ENCODE measurements at regions of chr1 and their contacts with region 1.

Region 1: DNA sequence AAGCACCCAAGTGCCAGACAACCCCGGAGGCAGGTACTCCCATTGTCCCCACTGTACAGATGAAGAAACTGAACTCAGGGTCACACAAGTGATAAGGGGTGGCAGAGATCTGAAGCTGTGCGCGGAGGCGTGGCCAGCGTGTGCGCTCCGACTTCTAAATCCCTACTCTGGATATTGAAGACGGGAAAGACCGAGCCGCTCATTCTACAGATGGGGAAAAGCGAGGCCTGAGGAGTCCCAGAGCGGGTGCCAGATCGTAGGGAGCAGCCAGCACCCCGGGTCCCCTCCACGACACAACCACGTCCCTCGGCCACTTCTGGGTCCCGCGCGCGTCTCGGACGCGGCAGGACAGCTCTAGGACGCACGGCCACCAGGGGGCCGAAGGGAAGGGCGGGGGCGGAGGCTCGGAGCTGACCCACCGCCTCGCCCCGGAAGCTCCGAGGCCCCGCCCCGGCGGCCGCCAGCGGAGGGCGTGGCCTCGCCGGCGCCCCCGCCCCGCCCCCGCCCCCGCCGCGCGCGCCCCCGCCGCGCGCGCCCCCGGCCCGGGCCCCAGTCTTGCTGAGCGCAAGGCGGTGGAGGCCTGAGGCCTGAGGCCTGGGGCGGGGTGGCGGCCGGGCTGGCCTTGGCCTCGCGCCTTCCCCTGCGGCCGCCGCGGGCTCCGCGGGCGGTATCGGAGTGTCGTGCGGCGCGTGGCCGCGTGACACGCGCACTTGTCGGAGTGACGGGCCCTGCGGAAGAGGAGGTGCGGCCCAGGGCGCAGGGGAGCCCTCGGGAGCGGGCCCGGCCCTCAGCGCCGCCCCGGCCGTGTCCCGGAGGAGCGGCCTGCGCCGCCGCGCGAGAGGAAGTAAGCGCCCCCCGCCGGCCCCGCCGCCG is at the start of gene H6PD:
- DNase-seq: peak; percentile 76
- ATAC-seq: peak; percentile 69
- H3K4me3 ChIP-seq: peak within 1 kb of the TSS; percentile 78 to 84 (median 83)
- H3K27ac ChIP-seq: peak within 1 kb of the TSS; percentile 92
- H3K4me1 ChIP-seq: peaks cover 74% of the 10 kb centered on the region
- H3K27me3 ChIP-seq: peaks cover 0 to 4% of the 10 kb centered on the region in 2 experiments; a peak in 1 of 5 replicates
- CTCF ChIP-seq: peak; percentile 89
- EP300 ChIP-seq: peak in 1 of 2 experiments; percentile 8; a peak in 1 of 4 replicates
- POLR2A ChIP-seq: peak; percentile 84
- RAD21 ChIP-seq: peak; percentile 73
- total RNA-seq, gene H6PD: 6.3 and 9.3 TPM in 2 replicates

Region 2: DNA sequence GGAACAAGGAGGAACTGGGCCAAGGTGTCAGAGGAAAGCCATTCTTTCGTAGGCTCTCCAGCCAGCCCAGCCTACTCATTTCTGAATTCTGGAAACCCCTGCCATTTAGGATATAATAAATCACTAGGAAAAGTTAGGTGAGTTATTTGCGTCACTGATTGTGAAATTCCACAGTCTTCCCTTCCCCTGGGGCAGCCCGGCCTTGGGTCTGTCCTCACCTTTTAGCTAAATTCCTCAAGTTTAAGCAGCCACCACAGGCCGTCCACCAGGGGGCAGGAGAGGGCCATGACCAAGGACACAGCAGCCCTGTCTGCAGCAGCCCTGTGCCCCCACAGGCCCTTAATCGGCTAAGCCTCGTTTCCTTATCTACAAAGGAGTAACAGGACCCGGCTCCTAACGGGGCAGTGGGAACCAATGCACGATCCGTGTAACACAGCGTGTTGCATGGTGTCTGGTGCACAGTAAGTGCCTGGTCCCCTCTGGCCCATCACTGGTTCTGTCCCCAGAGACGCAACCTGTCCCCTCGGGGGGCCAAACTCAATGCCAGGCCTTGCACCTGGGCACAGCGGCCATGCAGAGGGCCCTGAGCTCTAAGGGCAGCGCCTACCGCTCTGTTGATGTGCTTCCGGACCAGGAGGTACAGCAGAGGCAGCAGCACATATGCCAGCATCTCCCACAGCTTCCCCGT is 123.6 kb before region 1 on chr1:
- CTCF ChIA-PET with region 1: no interaction called
- POLR2A ChIA-PET with region 1: interaction called, 6 read pairs
- in situ Hi-C with region 1: no loop called
- intact Hi-C with region 1: loop called (anchors 5 kb)
- DNase-seq: peak; percentile 85
- ATAC-seq: peak; percentile 53
- H3K4me3 ChIP-seq: no peak overlapping the region; a peak in 1 of 6 replicates
- H3K27ac ChIP-seq: no peak overlapping the region
- H3K4me1 ChIP-seq: peaks cover 55% of the 10 kb centered on the region
- H3K27me3 ChIP-seq: no peaks in the 10 kb centered on the region
- CTCF ChIP-seq: peak; percentile 97
- EP300 ChIP-seq: no peak
- POLR2A ChIP-seq: no peak
- RAD21 ChIP-seq: peak; percentile 93

Region 3: DNA sequence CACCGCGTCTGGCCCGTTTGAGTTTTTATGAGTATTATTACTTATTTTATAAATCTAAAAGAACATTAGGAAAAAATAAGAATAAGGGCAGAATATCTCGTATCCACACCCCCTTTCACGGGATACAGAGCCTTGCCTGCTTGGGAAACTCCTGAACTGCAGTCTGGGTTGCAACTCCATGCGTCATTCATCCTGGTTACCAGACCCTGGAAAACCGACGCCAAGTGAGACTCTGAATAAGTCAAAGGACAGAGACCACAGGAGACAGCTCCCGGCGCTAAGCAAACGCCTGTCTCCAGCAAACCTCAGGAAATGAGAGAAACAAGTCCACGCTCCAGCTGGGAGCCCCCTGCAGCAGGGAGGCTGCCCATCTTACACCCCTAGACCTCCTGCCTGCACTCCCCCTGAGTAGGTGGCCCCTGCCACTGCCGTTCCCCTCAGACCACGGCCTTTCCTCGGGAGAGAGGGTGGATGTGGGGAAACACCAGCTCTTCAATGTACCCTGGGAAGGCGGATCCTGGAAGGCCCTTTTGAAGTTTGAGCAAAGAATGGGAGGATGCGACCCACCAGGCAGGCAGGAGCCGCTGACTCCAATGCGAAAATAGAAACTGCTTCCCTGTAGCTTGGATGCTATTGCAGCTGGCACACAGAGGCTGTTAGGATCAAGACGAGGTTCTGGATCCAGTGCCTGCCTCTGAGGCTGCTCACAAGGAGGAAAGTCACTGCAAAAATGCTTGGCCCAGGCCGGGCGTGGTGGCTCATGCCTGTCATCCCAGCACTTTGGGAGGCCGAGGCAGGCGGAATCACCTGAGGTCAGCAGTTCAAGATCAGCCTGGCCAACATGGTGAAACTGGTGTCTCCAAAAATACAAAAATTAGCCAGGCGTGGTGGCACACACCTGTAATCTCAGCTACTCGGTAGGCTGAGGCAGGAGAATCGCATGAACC is 67.9 kb before region 1 on chr1:
- CTCF ChIA-PET with region 1: no interaction called
- POLR2A ChIA-PET with region 1: interaction called, 11 read pairs
- in situ Hi-C with region 1: no loop called
- intact Hi-C with region 1: no loop called
- DNase-seq: no peak
- ATAC-seq: no peak
- H3K4me3 ChIP-seq: no peak overlapping the region
- H3K27ac ChIP-seq: no peak overlapping the region
- H3K4me1 ChIP-seq: peaks cover 81% of the 10 kb centered on the region
- H3K27me3 ChIP-seq: no peaks in the 10 kb centered on the region
- CTCF ChIP-seq: no peak
- EP300 ChIP-seq: no peak
- POLR2A ChIP-seq: no peak
- RAD21 ChIP-seq: no peak

Region 4: DNA sequence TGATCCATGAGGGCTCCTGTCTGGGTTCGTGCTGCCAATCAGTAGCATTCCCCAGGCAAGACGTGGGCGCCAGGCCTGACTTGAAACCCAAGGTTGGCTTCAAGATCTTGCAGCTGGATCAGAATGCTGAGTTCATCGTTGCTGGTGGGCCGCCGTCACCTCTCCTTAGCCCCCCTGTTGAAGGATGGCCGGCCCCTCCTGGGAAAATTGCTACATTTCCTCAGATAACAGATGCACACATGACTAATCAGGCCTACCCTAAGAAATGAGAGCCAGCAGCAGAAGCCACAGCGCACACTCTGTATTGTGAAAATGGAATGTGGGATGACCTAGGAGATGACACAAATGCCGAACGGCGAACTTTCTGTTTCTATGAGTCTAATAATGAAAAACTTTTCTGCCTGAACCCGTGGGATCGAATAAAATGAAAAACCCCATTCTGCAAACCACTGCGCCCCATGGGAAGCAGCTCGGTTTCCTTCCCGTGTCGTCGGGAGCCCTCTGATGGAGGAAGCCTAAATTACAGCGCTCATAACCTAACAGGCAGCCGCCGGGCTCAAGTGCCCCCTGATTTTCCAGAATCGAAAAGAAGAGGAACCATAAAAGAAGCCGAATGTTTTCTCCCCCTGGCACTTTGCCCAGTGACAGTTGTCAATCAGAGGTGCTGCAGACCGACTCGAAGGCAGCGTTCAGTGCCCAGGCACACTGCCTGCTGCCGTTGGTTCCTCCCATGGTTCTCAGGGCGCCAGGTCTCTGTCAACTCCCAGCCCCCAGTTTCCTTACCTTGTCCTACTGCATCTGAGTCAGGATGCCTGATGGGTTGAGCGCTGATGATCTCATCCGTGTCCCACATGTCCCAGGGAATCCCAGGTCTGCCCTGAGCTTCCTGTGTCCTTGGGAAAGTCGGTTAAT is 38.1 kb before region 1 on chr1:
- CTCF ChIA-PET with region 1: no interaction called
- POLR2A ChIA-PET with region 1: interaction called, 26 read pairs
- in situ Hi-C with region 1: no loop called
- intact Hi-C with region 1: loop called (anchors 5 kb)
- DNase-seq: peak; percentile 72
- ATAC-seq: peak; percentile 60
- H3K4me3 ChIP-seq: peak overlapping the region; percentile 39 to 71 (median 53)
- H3K27ac ChIP-seq: no peak overlapping the region
- H3K4me1 ChIP-seq: peaks cover 71% of the 10 kb centered on the region
- H3K27me3 ChIP-seq: peaks cover 15 to 42% of the 10 kb centered on the region in 2 experiments
- CTCF ChIP-seq: peak; percentile 83
- EP300 ChIP-seq: no peak; a peak in 1 of 4 replicates
- POLR2A ChIP-seq: no peak
- RAD21 ChIP-seq: peak; percentile 86

Region 5: GRCh38 chr1:9438431-9439073 is 204.1 kb after region 1 on chr1:
- CTCF ChIA-PET with region 1: no interaction called
- POLR2A ChIA-PET with region 1: interaction called, 12 read pairs
- in situ Hi-C with region 1: no loop called
- intact Hi-C with region 1: no loop called
- DNase-seq: peak; percentile 91
- ATAC-seq: peak; percentile 59
- H3K4me3 ChIP-seq: peak overlapping the region; percentile 29 to 64 (median 30)
- H3K27ac ChIP-seq: peak overlapping the region; percentile 88
- H3K4me1 ChIP-seq: peaks cover 100% of the 10 kb centered on the region
- H3K27me3 ChIP-seq: no peaks in the 10 kb centered on the region
- CTCF ChIP-seq: no peak
- EP300 ChIP-seq: peak; percentile 52 to 64; a peak in 2 of 4 replicates
- POLR2A ChIP-seq: peak; percentile 49 to 51; a peak in 2 of 4 replicates
- RAD21 ChIP-seq: no peak

Measured in HepG2 (cell line).